Activated CD4-positive, alpha-beta memory T cell treated with anti-CD3 and anti-CD28 coated beads for 36 hours (primary cell): ENCODE measurements at regions of chr5 and their contacts with region 1.

Region 1: DNA sequence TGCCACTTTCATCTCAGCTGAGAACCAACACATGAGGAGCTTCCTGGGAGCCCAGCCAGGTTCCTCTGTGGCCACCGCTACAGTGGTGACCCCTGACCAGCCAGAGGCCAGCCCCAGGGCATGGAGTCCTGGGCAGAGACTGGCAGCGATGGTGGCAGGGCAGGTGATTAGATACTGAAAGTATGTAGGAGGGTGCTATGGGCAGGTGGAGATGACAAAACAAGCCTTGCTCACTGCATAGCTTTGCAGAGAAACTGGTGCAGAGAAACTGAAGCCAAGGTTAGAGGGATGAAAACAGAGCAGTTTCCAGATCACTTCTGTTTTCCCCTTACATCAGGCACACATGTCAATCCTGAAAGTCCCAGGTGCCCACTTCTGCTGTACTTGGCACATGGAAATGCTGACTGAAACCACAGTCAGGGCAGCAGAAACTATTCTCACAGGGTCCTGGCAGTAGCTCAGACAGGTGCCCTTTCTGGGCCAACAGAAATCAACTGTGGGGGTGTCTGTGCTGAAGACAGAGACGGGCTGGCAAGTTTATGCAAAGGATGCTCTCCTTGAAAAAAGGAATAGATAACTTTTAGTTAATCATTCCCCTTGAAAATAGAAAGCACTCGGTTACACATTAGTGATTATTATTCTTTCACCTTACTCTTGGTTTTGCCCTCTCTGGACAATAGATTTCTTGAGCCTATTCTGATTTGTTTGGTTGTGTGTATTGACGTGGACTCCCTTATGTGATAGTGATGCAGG is 90.3 kb downstream of the ANKRD55 start:
- DNase-seq: peak; percentile 46
- H3K4me3 Mint-ChIP-seq: no peak overlapping the region
- H3K27ac Mint-ChIP-seq: peak overlapping the region; percentile 34
- H3K4me1 Mint-ChIP-seq: peaks cover 57% of the 10 kb centered on the region
- H3K27me3 Mint-ChIP-seq: no peaks in the 10 kb centered on the region

Region 2: DNA sequence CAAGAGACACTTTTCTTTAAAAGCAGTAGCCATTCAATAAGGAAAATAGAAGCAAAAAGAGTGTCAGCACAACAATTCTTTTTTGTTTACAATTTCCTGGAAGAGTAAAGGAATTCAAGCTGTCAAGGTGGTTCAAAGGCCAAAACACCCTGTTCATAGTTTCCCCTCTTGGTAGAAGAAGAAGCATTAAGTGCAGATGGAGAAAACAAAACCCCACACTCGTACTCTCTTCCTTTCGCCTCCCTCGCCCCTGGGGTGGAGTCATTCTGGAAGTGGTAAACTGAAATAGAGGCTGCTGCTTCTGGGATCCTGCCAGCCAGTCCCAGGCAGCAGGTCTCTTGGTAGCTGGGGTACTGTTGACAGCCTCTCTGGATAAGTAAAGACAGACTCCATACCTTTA is 14.7 kb before region 1 on chr5:
- CTCF ChIA-PET with region 1: no interaction called
- POLR2A ChIA-PET with region 1: no interaction called
- intact Hi-C with region 1: loop called (anchors 2 kb)
- DNase-seq: peak; percentile 77
- H3K4me3 Mint-ChIP-seq: peak overlapping the region; percentile 44
- H3K27ac Mint-ChIP-seq: peak overlapping the region; percentile 85
- H3K4me1 Mint-ChIP-seq: peaks cover 60% of the 10 kb centered on the region
- H3K27me3 Mint-ChIP-seq: no peaks in the 10 kb centered on the region